Posterior vena cava (tissue), 2 donors: ENCODE measurements at regions of chr19 and their contacts with region 1.

Region 1: DNA sequence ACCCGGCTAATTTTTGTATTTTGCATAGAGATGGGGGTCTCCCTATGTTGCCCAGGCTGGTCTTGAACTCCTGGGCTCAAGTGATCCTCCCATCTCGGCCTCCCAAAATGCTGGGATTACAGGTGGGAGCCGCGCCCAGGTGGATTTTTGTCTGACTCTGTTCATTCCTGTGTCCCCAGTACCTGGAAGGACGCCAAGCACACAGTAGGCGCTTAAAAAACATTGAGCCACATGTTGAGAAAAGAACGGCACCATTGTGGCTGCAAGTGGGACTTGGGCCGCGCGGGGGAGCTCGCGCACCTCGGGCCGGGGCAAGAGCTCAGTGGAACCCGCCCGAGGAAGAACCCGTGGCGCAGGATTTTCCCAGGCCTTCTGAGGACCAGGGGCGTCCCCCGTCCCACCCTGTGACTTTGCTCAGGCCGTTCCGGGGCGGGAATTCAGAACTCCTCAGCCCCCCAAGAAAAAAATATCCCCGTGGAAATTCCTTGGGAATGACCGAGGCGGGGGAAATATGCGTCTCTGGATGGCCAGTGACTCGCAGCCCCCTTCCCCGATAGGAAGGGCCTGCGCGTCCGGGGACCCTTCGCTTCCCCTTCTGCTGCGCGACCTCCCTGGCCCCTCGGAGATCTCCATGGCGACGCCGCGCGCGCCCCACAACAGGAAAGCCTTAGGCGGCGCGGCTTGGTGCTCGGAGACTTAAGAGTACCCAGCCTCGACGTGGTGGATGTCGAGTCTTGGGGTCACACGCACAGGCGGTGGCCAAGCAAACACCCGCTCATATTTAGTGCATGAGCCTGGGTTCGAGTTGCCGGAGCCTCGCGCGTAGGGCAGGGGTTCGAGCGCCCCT is 1.4 kb upstream of the ICAM1 start:
- DNase-seq: peak; percentile 97

Region 2: GRCh38 chr19:10321412-10321786 is 51.8 kb after region 1 on chr19:
- intact Hi-C with region 1: no loop called
- DNase-seq: no peak

Region 3: DNA sequence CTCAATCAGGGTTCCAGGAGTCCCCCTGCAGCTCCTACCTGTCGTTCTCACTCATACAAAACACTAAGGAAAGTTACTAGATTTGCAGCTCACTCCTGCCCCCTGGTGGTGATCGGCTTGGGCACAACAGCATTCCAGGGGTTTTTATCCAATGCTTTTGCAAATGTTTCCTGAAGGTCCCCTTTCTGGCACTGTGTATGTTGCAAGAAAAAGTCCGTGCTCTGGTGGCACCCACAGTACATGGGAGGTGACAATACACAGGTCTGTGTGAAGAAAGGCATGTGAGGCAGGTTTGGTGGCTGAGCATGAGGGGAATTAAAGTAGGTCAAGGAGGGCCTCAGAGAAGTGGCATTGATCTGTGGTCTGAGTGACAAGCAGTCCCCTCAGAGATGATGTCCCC is 119.4 kb after region 1 on chr19:
- intact Hi-C with region 1: loop called (anchors 2 kb)
- DNase-seq: peak; percentile 96